CD8-positive, alpha-beta T cell (primary cell): ENCODE measurements at regions of chr3 and their contacts with region 1.

Region 1: DNA sequence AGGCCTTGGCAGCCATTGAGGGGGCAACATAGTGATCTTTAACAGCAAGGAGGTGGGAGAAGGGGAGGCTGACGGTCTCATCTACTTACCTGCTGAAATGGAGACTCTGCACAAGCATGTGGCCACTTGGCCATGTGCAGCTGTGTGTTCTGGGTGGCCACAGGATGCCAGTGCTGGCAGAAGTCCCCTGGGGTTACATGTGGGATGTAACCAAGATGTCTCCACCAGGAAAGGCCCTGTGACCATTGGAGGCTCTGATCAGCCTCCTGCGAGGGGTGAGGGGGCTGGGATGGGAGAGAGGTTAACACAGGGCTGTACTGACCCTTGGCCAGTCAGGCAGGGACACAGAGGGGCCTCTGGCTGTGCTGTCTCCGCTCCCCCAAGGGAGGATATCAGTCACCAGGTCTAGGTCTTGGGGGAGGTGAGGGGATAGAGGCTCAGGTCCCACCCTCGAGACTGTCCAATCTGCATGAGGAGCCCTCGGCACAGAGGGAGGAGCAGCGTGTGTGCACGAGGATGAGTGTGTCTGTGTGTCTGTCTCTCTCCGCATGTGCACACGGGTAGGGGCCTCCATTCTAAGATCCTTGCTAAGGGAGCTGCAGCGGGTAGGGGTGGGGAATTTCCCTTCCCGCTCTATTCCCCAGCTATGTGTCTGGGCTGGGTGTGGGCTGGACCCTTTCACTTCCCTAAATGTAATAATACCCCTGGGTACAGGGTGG is 19.5 kb downstream of the PRKCD start:
- DNase-seq: peak in 2 of 9 experiments; percentile 13 to 36
- ATAC-seq: peak; percentile 36
- H3K4me3 ChIP-seq: no peak overlapping the region
- H3K4me3 Mint-ChIP-seq: no peak overlapping the region
- H3K27ac ChIP-seq: no peak overlapping the region
- H3K27ac Mint-ChIP-seq: no peak overlapping the region
- H3K4me1 ChIP-seq: no peaks in the 10 kb centered on the region
- H3K4me1 Mint-ChIP-seq: no peaks in the 10 kb centered on the region
- H3K27me3 ChIP-seq: no peaks in the 10 kb centered on the region
- H3K27me3 Mint-ChIP-seq: no peaks in the 10 kb centered on the region
- CTCF ChIP-seq: no peak

Region 2: DNA sequence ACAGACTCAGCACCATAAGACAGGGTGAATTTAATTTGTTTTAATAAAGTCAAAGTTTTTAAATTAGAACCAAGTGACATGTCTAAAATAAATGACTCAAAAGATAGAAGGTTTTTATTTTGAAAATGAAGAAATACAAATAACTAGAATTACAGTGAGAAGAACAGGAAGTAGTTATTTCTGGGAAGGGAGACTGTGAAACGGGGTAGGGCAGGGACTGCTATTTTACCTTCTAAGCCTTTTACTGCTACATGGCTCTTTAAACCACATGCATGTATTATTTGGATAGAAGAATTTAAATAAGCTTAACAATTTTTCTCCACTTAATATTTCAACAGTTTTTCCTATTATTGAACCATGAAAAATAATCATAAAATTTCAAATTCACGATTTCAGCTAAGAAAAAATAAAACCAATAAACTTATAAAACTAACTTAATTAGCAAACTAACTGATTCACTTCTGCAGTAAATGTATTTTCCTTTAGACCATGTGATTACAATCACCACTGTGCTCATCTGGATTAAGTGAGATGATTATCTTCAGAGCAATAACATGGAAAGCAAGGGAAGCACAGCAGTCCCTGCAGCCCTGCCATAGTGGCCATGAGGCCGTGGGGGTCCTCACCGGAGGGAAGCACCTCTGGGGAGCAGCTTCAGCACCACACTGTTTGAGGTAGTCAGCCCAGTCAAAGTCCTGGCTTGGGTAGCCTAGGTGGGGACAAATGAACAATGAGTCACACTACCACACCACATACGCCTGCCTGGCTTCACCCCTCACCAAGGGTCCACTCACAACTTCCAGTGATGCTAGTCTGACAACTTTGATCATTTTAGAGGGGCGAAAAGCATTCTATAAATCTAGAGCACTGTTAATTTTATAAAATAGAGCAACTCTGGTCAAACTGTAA is 254.8 kb before region 1 on chr3:
- CTCF ChIA-PET with region 1: no interaction called
- POLR2A ChIA-PET with region 1: no interaction called
- intact Hi-C with region 1: loop called in 1 of 2 experiments (anchors 10 kb)
- DNase-seq: no peak
- ATAC-seq: no peak
- H3K4me3 ChIP-seq: no peak overlapping the region
- H3K4me3 Mint-ChIP-seq: no peak overlapping the region
- H3K27ac ChIP-seq: no peak overlapping the region
- H3K27ac Mint-ChIP-seq: no peak overlapping the region
- H3K4me1 ChIP-seq: no peaks in the 10 kb centered on the region
- H3K4me1 Mint-ChIP-seq: no peaks in the 10 kb centered on the region
- H3K27me3 ChIP-seq: no peaks in the 10 kb centered on the region
- H3K27me3 Mint-ChIP-seq: no peaks in the 10 kb centered on the region
- CTCF ChIP-seq: no peak

Region 3: DNA sequence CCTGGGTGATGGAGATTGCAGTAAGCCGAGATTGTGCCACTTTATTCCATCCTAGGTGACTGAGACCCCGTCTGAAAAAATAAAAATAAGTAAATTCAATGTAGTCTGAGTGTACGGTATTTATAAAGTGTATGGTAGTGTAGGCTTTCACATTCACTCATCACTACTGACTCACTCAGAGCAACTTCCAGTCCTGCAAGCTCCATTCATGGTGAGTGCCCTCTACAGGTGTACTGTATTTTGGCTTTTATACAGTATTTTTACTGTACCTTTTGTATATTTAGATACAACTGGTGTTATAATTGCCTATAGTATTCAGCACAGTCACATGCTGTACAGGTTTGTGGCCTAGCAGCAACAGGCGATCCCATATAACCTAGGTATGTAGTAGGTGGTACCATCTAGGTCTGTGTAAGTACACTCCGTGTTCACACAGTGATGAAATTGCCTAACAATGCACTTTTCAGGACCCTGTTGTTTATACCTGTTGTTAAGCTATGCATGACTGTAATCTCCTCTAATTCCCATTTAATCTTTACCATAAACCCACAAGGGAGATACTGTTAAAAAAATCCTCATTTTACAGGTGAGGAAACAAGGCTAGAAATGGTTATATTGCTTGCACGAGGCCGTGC is 333.2 kb after region 1 on chr3:
- CTCF ChIA-PET with region 1: no interaction called
- POLR2A ChIA-PET with region 1: no interaction called
- intact Hi-C with region 1: no loop called
- DNase-seq: no peak
- ATAC-seq: no peak
- H3K4me3 ChIP-seq: no peak overlapping the region
- H3K4me3 Mint-ChIP-seq: no peak overlapping the region
- H3K27ac ChIP-seq: no peak overlapping the region
- H3K27ac Mint-ChIP-seq: no peak overlapping the region
- H3K4me1 ChIP-seq: no peaks in the 10 kb centered on the region
- H3K4me1 Mint-ChIP-seq: no peaks in the 10 kb centered on the region
- H3K27me3 ChIP-seq: no peaks in the 10 kb centered on the region
- H3K27me3 Mint-ChIP-seq: peaks cover 10% of the 10 kb centered on the region
- CTCF ChIP-seq: no peak